A673 (cell line): ENCODE measurements at regions of chr5 and their contacts with region 1.

Region 1: GRCh38 chr5:33194914-33195313 is 245.9 kb upstream of the TARS1 start:
- DNase-seq: no peak
- H3K4me3 ChIP-seq: no peak overlapping the region
- H3K27ac ChIP-seq: no peak overlapping the region
- H3K4me1 ChIP-seq: no peaks in the 10 kb centered on the region
- H3K27me3 ChIP-seq: no peaks in the 10 kb centered on the region
- CTCF ChIP-seq: no peak

Region 2: GRCh38 chr5:33254581-33254980 is 59.7 kb after region 1 on chr5:
- CTCF ChIA-PET with region 1: no interaction called
- POLR2A ChIA-PET with region 1: no interaction called
- intact Hi-C with region 1: no loop called
- DNase-seq: no peak
- H3K4me3 ChIP-seq: no peak overlapping the region
- H3K27ac ChIP-seq: no peak overlapping the region
- H3K4me1 ChIP-seq: no peaks in the 10 kb centered on the region
- H3K27me3 ChIP-seq: no peaks in the 10 kb centered on the region
- CTCF ChIP-seq: no peak

Region 3: GRCh38 chr5:33369485-33370472 is 174.9 kb after region 1 on chr5:
- CTCF ChIA-PET with region 1: no interaction called
- POLR2A ChIA-PET with region 1: no interaction called
- intact Hi-C with region 1: loop called (anchors 5 kb)
- DNase-seq: no peak
- H3K4me3 ChIP-seq: no peak overlapping the region
- H3K27ac ChIP-seq: no peak overlapping the region
- H3K4me1 ChIP-seq: no peaks in the 10 kb centered on the region
- H3K27me3 ChIP-seq: no peaks in the 10 kb centered on the region
- CTCF ChIP-seq: no peak